ENCODE measurements at regions of chr11 and their contacts with region 1.

Region 1: DNA sequence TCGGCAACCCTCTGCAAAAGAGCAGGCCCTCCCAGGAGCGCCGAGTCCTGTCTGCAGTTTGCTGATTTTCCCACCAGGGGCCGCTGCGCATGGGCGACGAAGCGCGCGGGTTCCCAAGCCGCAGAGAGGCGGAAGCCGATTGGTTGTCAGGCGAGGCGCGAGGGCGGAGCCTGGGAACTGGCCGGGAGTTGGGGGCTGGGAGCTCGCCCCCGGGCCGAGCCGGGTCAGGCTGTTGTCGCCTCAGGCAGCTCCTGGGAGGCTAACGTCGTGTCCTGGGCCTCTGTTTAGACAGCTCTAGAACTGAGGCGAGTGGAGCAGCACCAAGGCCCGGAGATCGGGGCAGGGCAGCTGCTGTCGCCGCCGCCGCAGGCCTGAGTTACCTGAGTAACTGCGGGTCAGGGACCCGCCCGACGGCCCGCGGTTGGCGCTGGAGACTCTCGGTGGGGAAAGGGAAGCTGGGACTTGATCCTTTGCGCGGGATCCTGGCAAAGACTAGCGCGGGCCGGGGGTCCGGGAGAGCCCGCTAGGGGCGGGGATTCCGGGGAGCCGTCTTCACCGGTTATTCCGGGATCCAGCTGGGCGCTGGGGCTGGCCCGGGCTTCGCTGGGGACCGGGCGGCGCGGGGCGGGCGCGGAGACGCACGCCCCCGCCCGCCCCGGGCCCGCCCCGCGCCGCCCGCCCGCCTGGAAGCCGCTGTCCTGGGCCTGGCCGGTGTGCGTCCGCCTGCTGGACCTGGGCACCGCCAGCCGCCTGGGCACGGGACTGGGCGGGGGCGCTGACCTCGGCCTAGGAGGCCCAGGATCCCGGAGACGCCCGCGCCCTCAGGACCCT is at the start of gene STIM1:
- DNase-seq: peak; percentile 96
- H3K4me3 Mint-ChIP-seq: peak within 1 kb of the TSS; percentile 98
- H3K27ac Mint-ChIP-seq: peak within 1 kb of the TSS; percentile 99
- H3K4me1 Mint-ChIP-seq: peaks cover 56% of the 10 kb centered on the region
- H3K27me3 Mint-ChIP-seq: no peaks in the 10 kb centered on the region
- total RNA-seq, gene STIM1: 103 to 108 TPM

Region 2: DNA sequence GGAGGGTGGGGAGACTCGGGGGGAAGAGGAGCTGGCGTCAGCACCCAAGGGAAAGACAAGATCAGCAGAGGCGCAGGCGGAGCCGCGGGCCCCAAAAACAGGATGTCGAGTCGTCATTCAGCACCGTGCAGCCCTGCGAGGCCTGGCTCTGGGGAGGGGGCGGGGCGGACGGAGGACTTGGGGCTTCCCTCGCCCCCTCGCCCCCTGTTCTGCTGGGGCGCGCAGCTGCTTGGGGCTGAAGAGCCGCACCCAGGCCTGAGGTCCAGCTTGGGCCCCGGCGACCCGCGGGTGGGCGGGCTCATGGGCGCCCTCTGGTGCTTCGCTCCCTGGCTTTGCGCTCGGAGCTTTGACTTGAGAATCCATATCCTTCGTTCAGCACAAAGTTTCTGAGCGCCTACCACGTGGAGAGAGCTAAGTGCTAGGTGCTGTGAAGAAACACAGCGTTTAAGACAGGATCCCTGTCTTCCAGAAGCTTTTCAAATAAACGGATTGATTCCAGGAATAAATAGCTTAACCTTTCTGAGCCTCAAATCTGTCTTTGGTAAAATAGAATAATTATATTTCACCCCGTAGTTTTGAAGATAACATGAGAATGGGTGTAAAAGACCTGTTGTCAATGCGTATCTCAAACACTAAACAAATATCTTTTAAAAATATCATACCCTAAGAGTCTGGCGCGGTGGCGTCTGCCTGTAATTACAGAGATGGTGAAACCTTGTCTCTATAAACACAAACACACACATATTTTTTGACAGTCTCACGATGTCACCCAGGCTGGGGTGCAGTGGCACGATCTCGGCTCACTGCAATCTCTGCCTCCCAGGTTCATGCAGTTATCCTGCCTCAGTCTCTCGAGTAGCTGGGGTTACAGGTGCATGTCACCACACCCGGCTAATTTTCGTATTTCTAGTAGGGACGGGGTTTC is 13.5 kb before region 1 on chr11:
- CTCF ChIA-PET with region 1: interaction called, 355 read pairs
- POLR2A ChIA-PET with region 1: interaction called, 5 read pairs
- DNase-seq: peak; percentile 93
- H3K4me3 Mint-ChIP-seq: peak overlapping the region; percentile 94
- H3K27ac Mint-ChIP-seq: peak overlapping the region; percentile 99
- H3K4me1 Mint-ChIP-seq: peaks cover 52% of the 10 kb centered on the region
- H3K27me3 Mint-ChIP-seq: no peaks in the 10 kb centered on the region

Region 3: GRCh38 chr11:3873712-3874349 is 18.6 kb after region 1 on chr11:
- CTCF ChIA-PET with region 1: interaction called, 56 read pairs
- POLR2A ChIA-PET with region 1: no interaction called
- DNase-seq: no peak
- H3K4me3 Mint-ChIP-seq: no peak overlapping the region
- H3K27ac Mint-ChIP-seq: peak overlapping the region; percentile 10
- H3K4me1 Mint-ChIP-seq: peaks cover 66% of the 10 kb centered on the region
- H3K27me3 Mint-ChIP-seq: no peaks in the 10 kb centered on the region

Region 4: GRCh38 chr11:3947061-3947460 is 91.9 kb after region 1 on chr11:
- CTCF ChIA-PET with region 1: interaction called, 28 read pairs
- POLR2A ChIA-PET with region 1: interaction called, 5 read pairs
- DNase-seq: peak; percentile 84
- H3K4me3 Mint-ChIP-seq: peak overlapping the region; percentile 69
- H3K27ac Mint-ChIP-seq: peak overlapping the region; percentile 90
- H3K4me1 Mint-ChIP-seq: peaks cover 93% of the 10 kb centered on the region
- H3K27me3 Mint-ChIP-seq: no peaks in the 10 kb centered on the region

Region 5: GRCh38 chr11:3969613-3970012 is 114.4 kb after region 1 on chr11:
- CTCF ChIA-PET with region 1: interaction called, 18 read pairs
- POLR2A ChIA-PET with region 1: no interaction called
- DNase-seq: peak; percentile 51
- H3K4me3 Mint-ChIP-seq: peak overlapping the region; percentile 23
- H3K27ac Mint-ChIP-seq: peak overlapping the region; percentile 84
- H3K4me1 Mint-ChIP-seq: peaks cover 74% of the 10 kb centered on the region
- H3K27me3 Mint-ChIP-seq: no peaks in the 10 kb centered on the region

Region 6: GRCh38 chr11:4072668-4073285 is 217.6 kb after region 1 on chr11:
- CTCF ChIA-PET with region 1: interaction called, 214 read pairs
- POLR2A ChIA-PET with region 1: no interaction called
- DNase-seq: peak; percentile 74
- H3K4me3 Mint-ChIP-seq: no peak overlapping the region
- H3K27ac Mint-ChIP-seq: peak overlapping the region; percentile 3
- H3K4me1 Mint-ChIP-seq: peaks cover 37% of the 10 kb centered on the region
- H3K27me3 Mint-ChIP-seq: no peaks in the 10 kb centered on the region

Measured in activated CD4-positive, alpha-beta T cell treated with anti-CD3 and anti-CD28 coated beads, Interleukin-2, amount 10 ng/mL, durations not matched to agents 7 days and 5 days (primary cell).